Activated CD4-positive, alpha-beta memory T cell treated with anti-CD3 and anti-CD28 coated beads for 36 hours (primary cell): ENCODE measurements at regions of chr5 and their contacts with region 1.

Region 1: GRCh38 chr5:134738133-134738962 is at the start of gene CAMLG:
- DNase-seq: peak; percentile 98
- H3K4me3 Mint-ChIP-seq: peak within 1 kb of the TSS; percentile 95
- H3K27ac Mint-ChIP-seq: peak within 1 kb of the TSS; percentile 89
- H3K4me1 Mint-ChIP-seq: peaks cover 24% of the 10 kb centered on the region
- H3K27me3 Mint-ChIP-seq: no peaks in the 10 kb centered on the region
- total RNA-seq, gene CAMLG: 40.3 to 41.2 TPM

Region 2: DNA sequence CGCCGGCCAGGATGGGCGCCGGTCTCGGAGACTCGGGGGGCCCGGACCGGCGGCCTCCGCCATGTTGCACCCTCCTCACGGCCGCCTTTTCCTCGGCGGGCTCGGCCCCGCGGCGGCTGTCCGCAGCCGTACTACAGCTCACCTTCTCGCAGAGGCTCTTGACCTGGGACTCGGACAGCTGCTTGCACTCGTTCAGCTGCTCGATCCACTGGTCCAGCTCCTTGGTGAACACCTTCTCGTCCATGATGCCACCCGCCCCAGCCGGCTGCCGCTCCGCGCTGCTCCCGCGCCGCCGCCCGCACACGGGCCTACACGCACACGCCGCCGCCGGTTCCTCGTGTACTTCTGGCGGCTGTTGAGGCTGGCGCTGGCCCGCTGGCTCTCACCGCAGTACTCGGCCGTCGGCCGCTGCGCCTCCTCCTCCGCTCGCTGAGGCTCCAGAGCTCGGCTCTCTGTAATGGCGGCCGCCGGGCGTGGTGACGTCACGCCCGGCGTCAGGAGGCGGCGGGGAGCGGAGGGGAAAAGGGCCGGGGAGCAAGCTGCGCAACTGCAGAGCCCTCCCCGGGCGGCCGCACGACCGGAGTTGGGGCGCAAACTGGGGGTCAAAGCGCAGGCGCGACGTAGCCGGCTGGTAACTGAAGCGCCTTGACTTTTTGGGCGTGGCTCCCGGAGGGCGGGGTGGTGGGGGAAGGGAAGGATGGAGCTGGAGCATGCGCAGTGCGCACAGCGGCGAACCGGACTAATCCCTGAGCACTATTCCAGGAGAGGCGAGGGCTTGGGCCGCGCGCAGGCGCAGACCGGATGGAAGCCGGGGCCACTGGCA is 512.5 kb before region 1 on chr5 and contains the start of gene PPP2CA:
- CTCF ChIA-PET with region 1: interaction called, 3 read pairs
- POLR2A ChIA-PET with region 1: interaction called, 6 read pairs
- intact Hi-C with region 1: loop called (anchors 1 kb)
- DNase-seq: peak; percentile 100
- H3K4me3 Mint-ChIP-seq: peak within 1 kb of the TSS; percentile 95
- H3K27ac Mint-ChIP-seq: peak within 1 kb of the TSS; percentile 97
- H3K4me1 Mint-ChIP-seq: peaks cover 50% of the 10 kb centered on the region
- H3K27me3 Mint-ChIP-seq: no peaks in the 10 kb centered on the region
- total RNA-seq, gene PPP2CA: 144 to 164 TPM

Region 3: DNA sequence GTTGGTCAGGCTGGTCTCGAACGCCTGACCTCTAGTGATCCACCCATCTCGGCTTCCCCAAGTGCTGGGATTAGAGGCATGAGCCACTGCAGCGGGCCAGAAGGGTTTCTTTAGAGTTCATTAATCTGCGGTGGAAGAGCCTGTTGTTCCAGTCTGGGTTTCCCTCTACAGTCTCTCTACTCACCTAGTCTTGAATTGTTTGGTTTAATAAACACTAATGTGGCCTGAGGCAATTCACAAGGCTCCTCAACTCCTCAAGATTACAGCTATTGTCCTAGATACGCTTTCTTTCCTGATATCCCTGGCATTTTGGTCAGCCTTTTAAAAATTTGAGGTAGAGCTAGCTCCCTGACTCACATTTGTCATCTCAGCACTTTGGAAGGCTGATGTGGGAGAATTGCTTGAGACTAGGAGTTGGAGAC is 101.2 kb before region 1 on chr5:
- CTCF ChIA-PET with region 1: interaction called, 5 read pairs
- POLR2A ChIA-PET with region 1: no interaction called
- intact Hi-C with region 1: loop called (anchors 2 kb)
- DNase-seq: no peak
- H3K4me3 Mint-ChIP-seq: no peak overlapping the region
- H3K27ac Mint-ChIP-seq: no peak overlapping the region
- H3K4me1 Mint-ChIP-seq: peaks cover 8% of the 10 kb centered on the region
- H3K27me3 Mint-ChIP-seq: no peaks in the 10 kb centered on the region

Region 4: GRCh38 chr5:134758504-134759341 is 20.4 kb after region 1 on chr5 and contains the start of gene DDX46:
- CTCF ChIA-PET with region 1: interaction called, 36 read pairs
- POLR2A ChIA-PET with region 1: interaction called, 27 read pairs
- intact Hi-C with region 1: loop called (anchors 1 kb)
- DNase-seq: peak; percentile 97
- H3K4me3 Mint-ChIP-seq: peak within 1 kb of the TSS; percentile 100
- H3K27ac Mint-ChIP-seq: peak within 1 kb of the TSS; percentile 87
- H3K4me1 Mint-ChIP-seq: peaks cover 34% of the 10 kb centered on the region
- H3K27me3 Mint-ChIP-seq: no peaks in the 10 kb centered on the region
- total RNA-seq, gene DDX46: 67.4 to 68.0 TPM

Region 5: DNA sequence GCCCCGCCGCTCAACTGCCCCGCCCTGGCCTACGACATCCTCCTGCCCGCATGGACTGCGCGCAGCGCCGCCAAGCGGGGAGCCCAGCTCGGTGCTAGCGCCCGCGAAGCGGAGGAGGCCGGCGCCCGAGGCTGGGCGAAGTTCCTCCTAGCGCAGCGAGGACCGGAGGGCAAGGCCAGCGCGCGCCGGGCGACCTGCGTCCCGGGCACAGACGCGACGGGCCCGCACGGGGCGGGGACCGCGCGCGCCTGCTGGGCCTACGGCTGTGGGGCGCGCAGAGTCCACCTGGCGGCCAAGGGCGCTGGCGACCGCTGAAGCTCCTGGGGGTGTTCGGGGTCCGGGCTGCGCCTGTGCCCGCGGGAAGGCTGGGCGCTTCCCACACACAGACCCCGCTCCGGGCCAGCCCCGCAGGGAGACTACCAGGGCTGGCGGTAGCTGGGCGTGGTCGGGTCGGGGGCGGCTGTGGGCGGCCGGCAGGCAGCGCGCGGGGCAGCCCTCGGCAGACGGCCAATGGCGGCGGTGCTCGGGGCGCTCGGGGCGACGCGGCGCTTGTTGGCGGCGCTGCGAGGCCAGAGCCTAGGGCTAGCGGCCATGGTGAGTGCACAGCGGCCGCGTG is 166.4 kb after region 1 on chr5 and contains the start of gene PCBD2:
- CTCF ChIA-PET with region 1: interaction called, 19 read pairs
- POLR2A ChIA-PET with region 1: interaction called, 9 read pairs
- intact Hi-C with region 1: loop called (anchors 1 kb)
- DNase-seq: peak; percentile 96
- H3K4me3 Mint-ChIP-seq: peak within 1 kb of the TSS; percentile 95
- H3K27ac Mint-ChIP-seq: peak within 1 kb of the TSS; percentile 99
- H3K4me1 Mint-ChIP-seq: peaks cover 17% of the 10 kb centered on the region
- H3K27me3 Mint-ChIP-seq: no peaks in the 10 kb centered on the region
- total RNA-seq, gene PCBD2: 9.8 to 13.2 TPM